ENCODE measurements at regions of chr7 and their contacts with region 1.

Region 1: DNA sequence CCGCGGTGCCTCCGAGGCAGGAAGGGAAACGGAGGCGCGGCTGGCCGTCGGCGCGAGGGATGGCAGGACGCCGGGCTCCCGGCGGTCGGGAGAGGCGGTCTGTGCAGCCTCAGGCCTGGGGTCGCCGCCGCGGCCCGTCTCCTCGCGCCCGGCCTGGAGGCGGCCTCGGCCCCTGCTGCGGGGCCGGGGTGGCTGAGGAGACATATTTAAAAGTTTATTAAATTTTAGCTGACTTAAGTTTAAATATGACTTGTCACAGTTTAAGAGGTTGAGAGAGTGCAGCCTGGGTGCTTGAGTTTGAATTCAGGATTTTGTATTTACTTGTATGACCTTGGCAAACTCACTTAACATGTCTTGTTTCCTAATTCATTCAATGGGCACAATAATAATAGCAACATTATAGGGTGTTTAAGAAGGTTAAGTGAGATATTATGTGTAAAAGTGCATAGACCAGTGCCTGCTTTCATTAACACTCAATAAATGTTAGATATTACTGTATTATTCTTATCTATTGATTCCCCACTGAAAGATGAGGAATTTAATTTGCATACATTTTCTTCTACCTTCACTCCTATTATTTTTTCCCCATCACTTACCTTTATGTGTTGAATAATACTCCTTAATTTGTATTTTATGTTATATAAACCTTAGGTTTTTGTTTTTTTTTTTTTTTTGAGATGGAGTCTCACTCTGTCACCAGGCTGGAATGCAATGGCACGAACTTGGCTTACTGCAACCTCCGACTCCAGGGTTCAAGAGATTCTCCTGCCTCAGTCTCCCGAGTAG is 718 bp downstream of the DYNC2I1 start:
- DNase-seq: no peak
- ATAC-seq: peak; percentile 55; the same call in 2 of the 3 replicates
- H3K4me3 ChIP-seq: peak overlapping the region; percentile 78
- H3K27ac ChIP-seq: peak overlapping the region; percentile 22
- H3K4me1 ChIP-seq: no peaks in the 10 kb centered on the region
- H3K27me3 ChIP-seq: no peaks in the 10 kb centered on the region
- CTCF ChIP-seq: no peak
- EP300 ChIP-seq: no peak
- POLR2A ChIP-seq: no peak
- RAD21 ChIP-seq: no peak

Region 2: GRCh38 chr7:157150882-157151281 is 1706.2 kb before region 1 on chr7:
- CTCF ChIA-PET with region 1: no interaction called
- POLR2A ChIA-PET with region 1: interaction called, 11 read pairs
- RAD21 ChIA-PET with region 1: no interaction called
- SMC1A ChIA-PET with region 1: no interaction called
- in situ Hi-C with region 1: no loop called
- intact Hi-C with region 1: no loop called
- DNase-seq: no peak
- ATAC-seq: no peak
- H3K4me3 ChIP-seq: no peak overlapping the region
- H3K27ac ChIP-seq: no peak overlapping the region
- H3K4me1 ChIP-seq: peaks cover 3% of the 10 kb centered on the region; the same call in 1 of the 2 replicates
- H3K27me3 ChIP-seq: no peaks in the 10 kb centered on the region
- CTCF ChIP-seq: no peak
- EP300 ChIP-seq: no peak
- POLR2A ChIP-seq: no peak
- RAD21 ChIP-seq: no peak

Measured in GM12878 (cell line).